ENCODE measurements at regions of chr4 and their contacts with region 1.

Region 1: DNA sequence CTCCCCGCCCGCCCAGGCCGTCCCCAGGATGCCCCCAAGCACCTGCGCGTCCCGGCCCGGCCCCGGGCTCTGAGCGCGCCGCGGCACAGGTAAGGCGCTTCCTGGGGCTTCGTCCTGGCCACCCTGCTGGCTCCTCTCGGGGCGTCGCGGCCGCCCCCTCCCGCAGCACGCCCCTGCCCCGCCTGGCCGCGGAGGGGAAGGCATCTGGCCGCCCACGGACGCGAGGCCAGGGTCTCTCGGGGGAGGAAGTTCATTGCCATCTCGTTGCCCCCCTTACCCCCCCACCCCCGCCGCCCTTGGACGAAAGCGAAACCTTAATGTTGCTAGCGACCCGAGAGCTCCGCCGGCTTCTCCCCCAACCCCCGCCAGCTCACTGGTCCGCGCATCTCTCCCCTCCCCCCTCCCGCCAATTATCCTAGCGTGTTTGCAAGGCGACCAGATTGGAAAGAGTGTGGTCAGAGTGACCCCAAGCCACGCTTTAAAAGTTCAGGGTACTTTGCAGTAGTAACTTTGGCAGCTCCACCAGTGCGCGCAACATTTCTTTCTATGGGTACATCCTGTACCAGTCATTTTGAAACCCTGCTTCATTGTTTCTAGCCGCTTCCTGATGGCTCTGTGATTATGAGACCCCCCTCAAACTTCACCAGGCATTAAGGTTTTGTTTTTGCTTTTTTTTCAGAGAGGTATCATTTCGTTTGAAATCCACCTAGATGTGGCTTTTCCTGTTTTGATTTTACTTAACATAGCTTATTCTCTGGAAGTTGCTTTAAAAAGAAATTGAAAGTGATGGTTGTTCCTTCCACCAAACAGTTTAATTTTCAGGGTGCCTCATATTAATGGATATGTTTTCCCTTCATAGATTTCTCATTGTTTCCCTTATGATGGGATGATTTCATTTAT is 626 bp downstream of the TBC1D1 start:
- DNase-seq: peak; percentile 88
- ATAC-seq: peak; percentile 72
- H3K4me3 Mint-ChIP-seq: peak overlapping the region; percentile 80
- H3K27ac Mint-ChIP-seq: peak overlapping the region; percentile 94
- H3K4me1 Mint-ChIP-seq: peaks cover 45% of the 10 kb centered on the region
- H3K27me3 Mint-ChIP-seq: no peaks in the 10 kb centered on the region
- CTCF ChIP-seq: no peak

Region 2: DNA sequence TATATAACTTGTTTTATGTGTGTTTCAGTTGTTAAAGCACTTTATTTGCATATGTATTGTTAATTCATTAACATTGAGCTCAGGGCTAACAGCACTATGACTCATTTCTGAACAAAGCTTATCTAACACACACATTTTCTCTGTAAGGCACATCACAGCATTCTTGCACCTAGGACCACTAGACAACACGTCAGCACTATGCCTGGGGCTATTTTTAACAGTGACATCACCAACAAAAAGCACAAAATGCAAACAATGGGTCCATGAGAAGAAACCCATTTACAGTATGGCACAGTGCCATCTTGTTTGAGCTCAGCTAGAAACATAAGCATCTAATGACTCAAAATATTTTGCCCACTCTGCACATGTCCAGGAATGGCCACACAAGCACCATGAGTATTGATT is 329.7 kb before region 1 on chr4:
- CTCF ChIA-PET with region 1: no interaction called
- POLR2A ChIA-PET with region 1: no interaction called
- intact Hi-C with region 1: no loop called
- DNase-seq: no peak
- ATAC-seq: no peak
- H3K4me3 Mint-ChIP-seq: no peak overlapping the region
- H3K27ac Mint-ChIP-seq: no peak overlapping the region
- H3K4me1 Mint-ChIP-seq: no peaks in the 10 kb centered on the region
- H3K27me3 Mint-ChIP-seq: no peaks in the 10 kb centered on the region
- CTCF ChIP-seq: no peak

Region 3: GRCh38 chr4:37771771-37772170 is 119.7 kb before region 1 on chr4:
- CTCF ChIA-PET with region 1: no interaction called
- POLR2A ChIA-PET with region 1: no interaction called
- intact Hi-C with region 1: no loop called
- DNase-seq: no peak
- ATAC-seq: no peak
- H3K4me3 Mint-ChIP-seq: no peak overlapping the region
- H3K27ac Mint-ChIP-seq: no peak overlapping the region
- H3K4me1 Mint-ChIP-seq: peaks cover 7% of the 10 kb centered on the region
- H3K27me3 Mint-ChIP-seq: no peaks in the 10 kb centered on the region
- CTCF ChIP-seq: no peak

Region 4: DNA sequence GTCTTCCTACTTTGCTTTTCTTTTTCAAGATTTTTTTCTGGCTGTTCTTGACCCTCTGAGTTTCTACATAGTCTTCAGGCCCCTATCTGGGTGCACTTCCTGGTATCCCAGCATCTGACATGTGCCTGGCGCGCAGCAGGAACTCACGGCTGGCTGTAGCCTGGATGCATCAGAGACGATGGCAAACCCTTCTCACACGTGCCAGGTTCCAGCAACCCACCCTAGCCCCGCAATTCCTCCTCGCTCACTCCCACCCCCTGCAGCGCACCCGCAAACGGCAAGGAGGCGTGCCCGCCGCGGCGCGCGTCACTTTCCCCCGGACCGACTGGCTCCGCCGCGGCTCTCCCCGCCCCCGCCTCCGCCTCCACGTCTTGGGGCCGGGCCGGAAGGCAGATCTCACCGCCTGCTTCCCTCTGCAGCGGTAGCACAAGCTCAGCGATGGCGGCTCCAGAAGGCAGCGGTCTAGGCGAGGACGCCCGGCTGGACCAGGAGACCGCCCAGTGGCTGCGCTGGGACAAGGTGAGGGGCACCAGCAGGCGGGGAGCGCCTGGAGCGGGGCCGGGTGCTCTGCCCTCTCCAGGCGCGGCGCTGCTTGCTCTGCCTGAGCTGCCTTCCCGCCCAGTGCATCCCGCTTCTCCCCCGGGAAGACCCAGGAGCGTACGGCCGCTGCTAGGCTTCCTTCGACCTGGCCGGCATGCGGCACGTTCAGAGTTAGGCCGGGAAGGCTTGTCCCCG is 65.0 kb before region 1 on chr4 and contains the start of gene PGM2:
- CTCF ChIA-PET with region 1: interaction called, 4 read pairs
- POLR2A ChIA-PET with region 1: interaction called, 8 read pairs
- intact Hi-C with region 1: loop called (anchors 2 kb)
- DNase-seq: peak; percentile 94
- ATAC-seq: peak; percentile 98
- H3K4me3 Mint-ChIP-seq: peak within 1 kb of the TSS; percentile 97
- H3K27ac Mint-ChIP-seq: peak within 1 kb of the TSS; percentile 90
- H3K4me1 Mint-ChIP-seq: peaks cover 28% of the 10 kb centered on the region
- H3K27me3 Mint-ChIP-seq: no peaks in the 10 kb centered on the region
- CTCF ChIP-seq: no peak
- total RNA-seq, gene PGM2: 63.0 to 67.6 TPM

Region 5: DNA sequence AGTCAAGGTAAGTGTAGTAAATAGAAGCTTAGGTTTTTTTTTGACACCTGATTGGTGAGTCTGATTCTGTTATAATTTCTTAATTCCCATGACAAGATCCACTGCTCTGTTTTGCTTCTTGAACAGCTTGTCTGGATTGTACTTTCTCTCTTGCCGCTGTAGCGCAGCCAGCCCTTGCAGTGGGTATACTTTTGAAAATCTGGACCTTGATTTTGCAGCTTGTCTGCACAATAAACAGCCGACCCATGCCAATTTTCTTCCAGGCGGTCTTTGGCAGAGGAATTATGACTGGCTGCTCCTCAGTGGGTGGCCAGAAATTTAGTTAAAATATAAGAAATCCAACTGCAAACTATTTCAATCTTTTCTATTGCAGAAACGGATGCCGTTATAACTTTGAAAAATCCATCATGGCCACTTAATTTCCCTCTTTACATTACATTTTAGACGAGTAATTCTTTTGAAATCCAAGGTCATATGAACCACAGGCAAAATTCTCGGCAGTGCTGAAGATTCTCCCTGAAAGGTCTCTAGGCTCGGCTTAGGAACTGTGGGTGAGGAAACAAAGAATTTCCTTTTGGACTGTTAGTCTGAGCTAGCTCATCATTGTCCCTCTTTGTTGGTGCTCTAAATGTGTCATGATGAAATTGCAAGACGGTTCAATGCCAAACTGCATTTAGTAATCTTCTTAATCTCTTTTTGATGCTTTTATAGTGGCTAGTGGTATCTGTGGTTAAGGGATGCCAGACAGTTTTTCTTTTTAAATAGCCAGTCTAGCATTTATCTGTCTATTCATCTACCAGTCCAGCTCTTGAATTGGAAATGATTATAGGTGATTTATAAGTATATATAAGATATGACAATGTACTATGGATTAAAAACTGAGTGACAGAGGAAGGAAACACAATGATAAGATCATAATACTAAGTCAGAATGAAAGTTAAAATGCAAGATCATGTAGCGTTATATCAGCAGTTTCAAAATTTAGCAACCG is 37.2 kb after region 1 on chr4:
- CTCF ChIA-PET with region 1: interaction called, 3 read pairs
- POLR2A ChIA-PET with region 1: interaction called, 4 read pairs
- intact Hi-C with region 1: loop called (anchors 5 kb)
- DNase-seq: no peak
- ATAC-seq: peak; percentile 51
- H3K4me3 Mint-ChIP-seq: no peak overlapping the region
- H3K27ac Mint-ChIP-seq: no peak overlapping the region
- H3K4me1 Mint-ChIP-seq: peaks cover 28% of the 10 kb centered on the region
- H3K27me3 Mint-ChIP-seq: no peaks in the 10 kb centered on the region
- CTCF ChIP-seq: no peak

Region 6: GRCh38 chr4:37970487-37971101 is 79.1 kb after region 1 on chr4:
- CTCF ChIA-PET with region 1: interaction called, 10 read pairs
- POLR2A ChIA-PET with region 1: interaction called, 4 read pairs
- intact Hi-C with region 1: loop called (anchors 2 kb)
- DNase-seq: peak; percentile 80
- ATAC-seq: peak; percentile 90
- H3K4me3 Mint-ChIP-seq: no peak overlapping the region
- H3K27ac Mint-ChIP-seq: no peak overlapping the region
- H3K4me1 Mint-ChIP-seq: peaks cover 20% of the 10 kb centered on the region
- H3K27me3 Mint-ChIP-seq: no peaks in the 10 kb centered on the region
- CTCF ChIP-seq: peak; percentile 49

Region 7: GRCh38 chr4:37977471-37978247 is 86.1 kb after region 1 on chr4:
- CTCF ChIA-PET with region 1: interaction called, 19 read pairs
- POLR2A ChIA-PET with region 1: interaction called, 21 read pairs
- intact Hi-C with region 1: loop called (anchors 2 kb)
- DNase-seq: peak; percentile 78
- ATAC-seq: peak; percentile 71
- H3K4me3 Mint-ChIP-seq: peak overlapping the region; percentile 81
- H3K27ac Mint-ChIP-seq: peak overlapping the region; percentile 80
- H3K4me1 Mint-ChIP-seq: peaks cover 37% of the 10 kb centered on the region
- H3K27me3 Mint-ChIP-seq: no peaks in the 10 kb centered on the region
- CTCF ChIP-seq: peak; percentile 65

Region 8: DNA sequence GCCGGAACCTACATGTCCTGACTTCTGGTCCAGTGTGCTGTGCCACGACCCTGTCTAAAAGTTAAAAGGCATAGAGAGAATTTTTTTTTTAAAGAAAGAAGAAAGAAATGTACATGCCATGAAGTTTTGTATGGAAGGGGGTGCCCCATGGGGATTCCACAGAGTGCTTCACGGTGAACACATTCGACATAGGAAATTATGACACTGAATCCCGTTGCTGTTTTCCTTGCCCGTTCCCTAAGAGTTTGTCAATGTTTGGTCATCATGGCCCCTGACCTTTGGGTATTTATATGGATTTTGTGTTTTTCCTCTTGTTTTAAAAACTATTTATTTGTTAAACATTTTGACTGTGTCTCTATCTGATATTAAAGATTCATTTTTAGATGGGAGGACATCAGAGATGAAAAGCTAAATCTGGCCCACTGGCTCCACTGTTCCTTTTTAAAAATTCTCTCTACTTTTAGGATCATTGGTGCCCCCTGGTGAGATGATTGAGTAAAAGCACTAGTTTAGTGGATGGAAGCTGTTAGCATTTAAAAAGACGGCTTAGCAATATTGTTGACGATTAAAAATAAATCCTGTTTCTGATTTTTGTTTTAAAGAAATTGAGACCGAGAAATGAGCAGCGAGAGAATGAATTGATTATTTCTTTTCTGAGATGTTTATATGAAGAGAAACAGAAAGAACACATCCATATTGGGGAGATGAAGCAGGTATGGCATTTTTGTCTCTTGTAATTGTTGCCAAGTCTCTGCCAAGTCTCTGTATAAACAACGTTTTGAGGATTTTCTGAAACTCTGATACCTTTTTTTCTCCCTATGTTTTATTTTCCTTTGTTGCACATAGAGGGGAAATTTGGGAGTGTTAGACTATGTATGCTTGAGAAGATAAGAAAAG is 143.7 kb after region 1 on chr4:
- CTCF ChIA-PET with region 1: interaction called, 4 read pairs
- POLR2A ChIA-PET with region 1: no interaction called
- intact Hi-C with region 1: loop called (anchors 10 kb)
- DNase-seq: peak; percentile 44
- ATAC-seq: peak; percentile 66
- H3K4me3 Mint-ChIP-seq: no peak overlapping the region
- H3K27ac Mint-ChIP-seq: no peak overlapping the region
- H3K4me1 Mint-ChIP-seq: no peaks in the 10 kb centered on the region
- H3K27me3 Mint-ChIP-seq: no peaks in the 10 kb centered on the region
- CTCF ChIP-seq: peak; percentile 79